ENCODE measurements at regions of chr15 and their contacts with region 1.

Region 1: GRCh38 chr15:58298879-58299850 is 132.6 kb upstream of the LIPC start:
- DNase-seq: no peak
- H3K4me3 Mint-ChIP-seq: no peak overlapping the region
- H3K27ac Mint-ChIP-seq: no peak overlapping the region
- H3K4me1 Mint-ChIP-seq: peaks cover 38% of the 10 kb centered on the region
- H3K27me3 Mint-ChIP-seq: no peaks in the 10 kb centered on the region

Region 2: DNA sequence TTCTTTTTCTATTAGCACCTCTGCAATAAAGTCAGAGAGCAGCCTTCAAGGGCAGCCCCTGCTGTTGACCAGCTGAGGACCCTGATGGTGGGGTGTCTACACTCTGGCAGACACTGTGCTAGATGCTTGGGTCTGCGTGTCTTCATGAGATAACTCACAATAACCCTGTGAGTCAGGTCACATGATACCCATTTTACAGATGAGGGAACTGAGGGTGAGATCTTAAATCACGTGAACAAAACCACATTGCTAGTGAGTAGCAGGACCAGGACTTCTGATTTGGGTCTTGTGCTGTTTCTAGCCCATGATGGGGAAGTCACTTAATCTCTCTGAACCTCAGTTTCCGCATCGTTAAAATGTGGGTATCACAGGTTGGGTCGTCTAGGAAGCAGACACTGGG is 14.1 kb after region 1 on chr15:
- intact Hi-C with region 1: loop called (anchors 1 kb)
- DNase-seq: no peak
- H3K4me3 Mint-ChIP-seq: no peak overlapping the region
- H3K27ac Mint-ChIP-seq: no peak overlapping the region
- H3K4me1 Mint-ChIP-seq: peaks cover 23% of the 10 kb centered on the region
- H3K27me3 Mint-ChIP-seq: no peaks in the 10 kb centered on the region

Region 3: DNA sequence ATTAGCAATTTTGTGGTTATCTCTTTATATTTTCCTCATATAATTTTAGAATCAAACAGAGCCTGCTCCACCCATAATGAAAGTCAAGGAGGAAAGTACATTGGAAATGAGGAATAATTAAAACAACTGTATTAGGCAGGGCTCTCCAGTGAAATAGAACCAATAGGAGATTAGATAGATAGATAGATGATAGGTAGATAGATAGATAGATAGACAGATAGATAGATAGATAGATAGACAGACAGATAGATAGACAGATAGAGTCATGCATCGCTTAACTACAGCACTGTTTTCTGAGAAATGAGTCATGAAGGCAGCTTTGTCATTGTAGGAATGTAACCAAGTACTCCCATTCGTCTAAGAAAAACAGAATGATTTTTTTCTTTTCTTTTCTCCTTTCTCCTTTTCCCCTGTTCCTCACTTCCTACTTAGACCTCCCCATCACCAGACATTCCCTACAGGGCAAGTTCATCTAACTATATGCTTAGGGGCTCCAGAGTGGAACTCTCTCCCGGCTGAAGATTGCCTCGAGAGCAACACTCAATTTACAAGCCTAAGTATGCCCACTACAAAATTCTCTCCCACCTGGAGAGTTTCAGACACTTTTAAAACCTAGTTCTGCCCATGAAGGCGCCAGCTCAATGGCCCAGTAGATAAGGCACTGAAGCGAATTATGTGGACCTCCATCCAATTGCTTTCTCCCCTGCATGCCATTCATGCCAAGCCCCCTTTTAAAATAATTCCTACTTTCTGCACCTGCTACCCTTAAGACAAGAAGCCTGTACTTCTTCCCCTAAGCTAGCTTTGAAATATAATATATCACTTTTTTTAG is 79.3 kb after region 1 on chr15:
- intact Hi-C with region 1: no loop called
- DNase-seq: no peak
- H3K4me3 Mint-ChIP-seq: no peak overlapping the region
- H3K27ac Mint-ChIP-seq: no peak overlapping the region
- H3K4me1 Mint-ChIP-seq: peaks cover under 1% of the 10 kb centered on the region
- H3K27me3 Mint-ChIP-seq: peaks cover 10% of the 10 kb centered on the region